CD4-positive, alpha-beta memory T cell (primary cell): ENCODE measurements at regions of chr16 and their contacts with region 1.

Region 1: GRCh38 chr16:84726079-84726668 is 26.4 kb downstream of the USP10 start:
- DNase-seq: peak; percentile 70 to 80 (median 76)
- H3K4me3 ChIP-seq: no peak overlapping the region
- H3K4me3 Mint-ChIP-seq: peak overlapping the region in 6 of 8 donors; percentile 33 to 76 (median 56)
- H3K27ac ChIP-seq: no peak overlapping the region
- H3K27ac Mint-ChIP-seq: peak overlapping the region in 4 of 7 donors; percentile 45 to 66 (median 52)
- H3K4me1 ChIP-seq: peaks cover 47% of the 10 kb centered on the region
- H3K4me1 Mint-ChIP-seq: peaks cover 40 to 67% (median 57%) of the 10 kb centered on the region in 4 donors
- H3K27me3 ChIP-seq: no peaks in the 10 kb centered on the region
- H3K27me3 Mint-ChIP-seq: no peaks in the 10 kb centered on the region

Region 2: GRCh38 chr16:84638195-84638806 is 87.9 kb before region 1 on chr16:
- CTCF ChIA-PET with region 1: no interaction called
- POLR2A ChIA-PET with region 1: no interaction called
- intact Hi-C with region 1: no loop called
- DNase-seq: no peak
- H3K4me3 ChIP-seq: no peak overlapping the region
- H3K4me3 Mint-ChIP-seq: peak overlapping the region in 1 of 8 donors; percentile 32
- H3K27ac ChIP-seq: no peak overlapping the region
- H3K27ac Mint-ChIP-seq: peak overlapping the region in 1 of 7 donors; percentile 13
- H3K4me1 ChIP-seq: peaks cover 27% of the 10 kb centered on the region
- H3K4me1 Mint-ChIP-seq: peaks cover 14 to 39% (median 27%) of the 10 kb centered on the region in 4 donors
- H3K27me3 ChIP-seq: no peaks in the 10 kb centered on the region
- H3K27me3 Mint-ChIP-seq: no peaks in the 10 kb centered on the region

Region 3: GRCh38 chr16:84663433-84664101 is 62.6 kb before region 1 on chr16:
- CTCF ChIA-PET with region 1: interaction called, 30 read pairs
- POLR2A ChIA-PET with region 1: no interaction called
- intact Hi-C with region 1: no loop called
- DNase-seq: no peak
- H3K4me3 ChIP-seq: no peak overlapping the region
- H3K4me3 Mint-ChIP-seq: no peak overlapping the region
- H3K27ac ChIP-seq: no peak overlapping the region
- H3K27ac Mint-ChIP-seq: no peak overlapping the region
- H3K4me1 ChIP-seq: no peaks in the 10 kb centered on the region
- H3K4me1 Mint-ChIP-seq: peaks cover 4 to 24% (median 6%) of the 10 kb centered on the region in 4 donors
- H3K27me3 ChIP-seq: no peaks in the 10 kb centered on the region
- H3K27me3 Mint-ChIP-seq: no peaks in the 10 kb centered on the region

Region 4: GRCh38 chr16:84699712-84700445 is 26.3 kb before region 1 on chr16 and contains the start of gene USP10:
- CTCF ChIA-PET with region 1: interaction called, 36 read pairs
- POLR2A ChIA-PET with region 1: no interaction called
- intact Hi-C with region 1: no loop called
- DNase-seq: peak; percentile 83 to 91 (median 88)
- H3K4me3 ChIP-seq: peak within 1 kb of the TSS; percentile 78 to 86
- H3K4me3 Mint-ChIP-seq: peak within 1 kb of the TSS; percentile 95 to 100 (median 98)
- H3K27ac ChIP-seq: peak within 1 kb of the TSS; percentile 92
- H3K27ac Mint-ChIP-seq: peak within 1 kb of the TSS; percentile 93 to 99 (median 98)
- H3K4me1 ChIP-seq: peaks cover 47% of the 10 kb centered on the region
- H3K4me1 Mint-ChIP-seq: peaks cover 23 to 46% (median 35%) of the 10 kb centered on the region in 4 donors
- H3K27me3 ChIP-seq: no peaks in the 10 kb centered on the region
- H3K27me3 Mint-ChIP-seq: no peaks in the 10 kb centered on the region
- total RNA-seq, gene USP10: 89.0 to 93.2 TPM

Region 5: DNA sequence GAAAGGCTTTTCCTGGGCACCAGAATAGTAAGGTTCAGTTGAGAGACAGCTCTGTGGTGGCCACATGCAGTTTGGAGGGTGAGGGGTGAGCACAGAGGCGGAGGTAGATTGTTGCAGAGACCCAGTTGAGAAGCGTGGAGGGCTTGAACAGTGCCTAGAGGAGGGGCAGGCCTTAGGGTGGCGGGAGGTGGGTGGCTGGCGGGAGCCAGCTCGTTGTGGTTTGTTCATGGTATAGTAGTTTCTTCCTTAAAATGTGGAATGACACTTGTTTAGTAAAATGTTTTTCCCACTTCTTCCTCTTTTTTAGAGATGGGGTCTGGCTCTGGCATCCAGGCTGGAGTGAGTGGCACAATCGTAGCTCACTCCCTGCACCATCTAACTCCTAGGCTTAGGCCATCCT is 12.1 kb before region 1 on chr16:
- CTCF ChIA-PET with region 1: interaction called, 40 read pairs
- POLR2A ChIA-PET with region 1: no interaction called
- intact Hi-C with region 1: no loop called
- DNase-seq: no peak
- H3K4me3 ChIP-seq: no peak overlapping the region
- H3K4me3 Mint-ChIP-seq: peak overlapping the region in 2 of 8 donors; percentile 5 to 69
- H3K27ac ChIP-seq: no peak overlapping the region
- H3K27ac Mint-ChIP-seq: peak overlapping the region in 4 of 7 donors; percentile 30 to 82 (median 46)
- H3K4me1 ChIP-seq: peaks cover 44% of the 10 kb centered on the region
- H3K4me1 Mint-ChIP-seq: peaks cover 62 to 94% (median 75%) of the 10 kb centered on the region in 4 donors
- H3K27me3 ChIP-seq: no peaks in the 10 kb centered on the region
- H3K27me3 Mint-ChIP-seq: no peaks in the 10 kb centered on the region

Region 6: DNA sequence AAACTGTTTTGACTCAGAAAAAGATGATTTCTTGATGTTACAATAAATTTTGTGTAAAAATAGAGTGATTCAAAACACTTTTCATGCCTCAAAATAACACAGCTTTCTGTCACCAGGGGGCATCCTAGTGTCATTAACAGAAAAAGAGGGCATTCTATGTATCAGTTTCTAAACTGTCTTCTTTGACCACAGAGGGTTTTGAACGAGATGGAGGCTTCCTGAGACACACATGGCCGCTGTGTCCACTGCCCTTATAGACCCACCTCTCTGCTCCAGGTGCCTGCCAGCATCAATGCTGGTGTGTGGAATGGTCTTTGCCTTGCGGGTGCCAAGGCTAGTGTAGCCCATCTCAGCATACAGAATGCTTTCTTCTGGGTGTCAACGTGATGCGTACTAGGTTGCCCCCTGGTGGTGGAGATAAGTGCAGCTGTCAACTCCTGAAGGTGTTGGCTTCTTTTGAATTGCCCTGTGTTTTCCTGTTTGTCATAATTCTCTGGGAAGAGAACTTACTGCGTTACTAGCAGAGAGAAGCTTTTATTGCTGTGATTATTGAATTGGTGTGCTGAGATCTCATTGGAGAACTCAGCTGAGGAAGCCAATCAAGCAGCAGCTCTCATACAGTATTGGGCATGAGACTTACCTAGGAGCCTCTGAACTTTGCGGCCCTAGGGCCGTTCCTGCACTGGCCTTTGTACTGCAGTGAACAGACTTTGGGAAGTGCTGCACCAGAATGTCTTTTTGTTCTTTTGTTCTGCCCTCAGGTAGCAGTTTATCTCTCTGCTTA is 12.3 kb after region 1 on chr16:
- CTCF ChIA-PET with region 1: interaction called, 138 read pairs
- POLR2A ChIA-PET with region 1: interaction called, 3 read pairs
- intact Hi-C with region 1: no loop called
- DNase-seq: peak; percentile 75 to 82 (median 78)
- H3K4me3 ChIP-seq: no peak overlapping the region
- H3K4me3 Mint-ChIP-seq: peak overlapping the region; percentile 27 to 80 (median 64)
- H3K27ac ChIP-seq: no peak overlapping the region
- H3K27ac Mint-ChIP-seq: peak overlapping the region; percentile 2 to 87 (median 80)
- H3K4me1 ChIP-seq: peaks cover 33% of the 10 kb centered on the region
- H3K4me1 Mint-ChIP-seq: peaks cover 36 to 53% (median 43%) of the 10 kb centered on the region in 4 donors
- H3K27me3 ChIP-seq: no peaks in the 10 kb centered on the region
- H3K27me3 Mint-ChIP-seq: no peaks in the 10 kb centered on the region

Region 7: GRCh38 chr16:84746882-84747281 is 20.7 kb after region 1 on chr16:
- CTCF ChIA-PET with region 1: interaction called, 138 read pairs
- POLR2A ChIA-PET with region 1: no interaction called
- intact Hi-C with region 1: no loop called
- DNase-seq: no peak
- H3K4me3 ChIP-seq: no peak overlapping the region
- H3K4me3 Mint-ChIP-seq: no peak overlapping the region
- H3K27ac ChIP-seq: no peak overlapping the region
- H3K27ac Mint-ChIP-seq: no peak overlapping the region
- H3K4me1 ChIP-seq: peaks cover 16% of the 10 kb centered on the region
- H3K4me1 Mint-ChIP-seq: peaks cover 25 to 37% (median 33%) of the 10 kb centered on the region in 4 donors
- H3K27me3 ChIP-seq: no peaks in the 10 kb centered on the region
- H3K27me3 Mint-ChIP-seq: no peaks in the 10 kb centered on the region